Activated CD8-positive, alpha-beta memory T cell treated with anti-CD3 and anti-CD28 coated beads, Interleukin-2, amount 10 ng/mL, durations not matched to agents 7 days and 5 days (primary cell): ENCODE measurements at regions of chr10 and their contacts with region 1.

Region 1: DNA sequence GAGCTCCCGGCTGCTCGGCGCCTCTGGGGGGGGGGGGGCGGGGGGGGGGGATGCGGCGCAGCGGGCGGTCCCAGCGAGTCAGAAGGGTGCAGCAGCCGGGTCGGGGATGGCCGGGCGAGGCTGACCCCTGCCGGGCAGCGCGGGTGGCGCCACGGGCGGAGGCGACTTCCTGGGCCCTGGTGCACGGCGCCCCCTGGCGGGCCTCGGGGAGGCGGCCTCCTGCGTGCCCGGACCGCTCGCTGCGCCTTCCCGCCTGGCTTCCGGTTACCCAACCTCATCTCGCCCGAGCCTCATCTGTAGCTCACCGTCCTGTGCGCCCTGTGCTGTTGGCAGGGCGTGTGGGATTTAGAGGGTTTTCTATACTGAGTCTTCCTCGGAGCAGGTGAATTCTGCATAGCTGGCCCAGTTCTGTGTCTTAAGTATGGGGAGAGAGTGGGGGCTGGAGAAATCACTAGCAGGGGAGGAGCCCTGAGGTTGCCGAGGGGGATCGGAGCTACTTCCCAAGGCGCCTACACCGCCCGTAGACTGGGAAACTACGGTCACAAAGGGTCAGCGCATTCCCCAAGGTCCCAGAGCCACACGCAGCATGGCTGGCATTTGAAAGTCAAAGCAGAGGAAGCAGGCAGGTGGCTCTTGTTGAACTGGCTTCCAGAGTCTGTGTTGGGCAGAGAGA is 28.3 kb upstream of the WDFY4 start:
- DNase-seq: peak; percentile 92
- ATAC-seq: peak; percentile 98
- H3K4me3 Mint-ChIP-seq: peak overlapping the region; percentile 68
- H3K27ac Mint-ChIP-seq: no peak overlapping the region
- H3K4me1 Mint-ChIP-seq: peaks cover 12% of the 10 kb centered on the region
- H3K27me3 Mint-ChIP-seq: peaks cover 35% of the 10 kb centered on the region

Region 2: GRCh38 chr10:48551861-48552591 is 104.4 kb before region 1 on chr10:
- CTCF ChIA-PET with region 1: interaction called, 87 read pairs
- DNase-seq: peak; percentile 41
- ATAC-seq: no peak
- H3K4me3 Mint-ChIP-seq: no peak overlapping the region
- H3K27ac Mint-ChIP-seq: no peak overlapping the region
- H3K4me1 Mint-ChIP-seq: no peaks in the 10 kb centered on the region
- H3K27me3 Mint-ChIP-seq: peaks cover 2% of the 10 kb centered on the region

Region 3: DNA sequence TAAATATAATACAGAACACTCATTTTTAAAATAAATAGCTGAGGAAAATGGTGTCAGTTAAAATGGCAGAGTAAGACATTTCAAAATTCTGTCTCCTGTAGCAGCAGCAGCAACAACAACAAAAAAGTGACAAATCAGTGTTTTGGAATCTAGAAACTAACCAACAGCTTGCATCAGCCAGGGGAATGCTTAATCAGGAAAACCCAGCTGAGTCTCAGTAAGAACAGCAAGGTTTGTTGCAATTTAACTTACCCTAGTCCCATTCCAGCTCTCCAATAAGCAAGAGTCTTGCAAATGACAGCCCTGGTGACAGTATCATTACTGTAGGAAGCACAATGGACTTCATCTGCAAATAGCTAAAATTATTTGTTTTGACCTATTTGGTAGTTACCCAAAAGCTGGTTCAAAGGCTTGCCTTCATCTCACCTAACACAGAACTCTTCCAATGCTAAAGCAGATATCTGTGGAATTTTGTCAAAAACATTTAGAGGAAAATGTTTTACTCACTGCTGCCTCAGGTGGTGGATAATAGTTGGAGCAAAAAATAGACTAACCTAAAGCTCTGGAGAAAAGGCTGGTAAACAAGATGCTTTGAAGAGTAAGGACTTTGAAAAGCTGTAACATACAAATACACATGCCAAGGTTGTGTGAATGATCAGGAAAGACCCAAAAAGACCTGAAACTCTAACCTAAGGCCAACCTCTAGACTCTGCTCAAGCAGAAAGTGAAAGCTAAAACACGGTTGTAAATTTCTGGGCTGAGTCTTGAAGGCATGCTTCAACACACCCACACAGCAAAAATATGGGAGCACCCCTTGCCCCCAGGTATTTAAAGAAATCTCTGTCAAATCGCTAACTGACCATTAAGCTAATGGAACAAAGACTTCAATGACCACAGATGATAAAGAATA is 41.6 kb before region 1 on chr10:
- CTCF ChIA-PET with region 1: interaction called, 15 read pairs
- DNase-seq: no peak
- ATAC-seq: no peak
- H3K4me3 Mint-ChIP-seq: no peak overlapping the region
- H3K27ac Mint-ChIP-seq: no peak overlapping the region
- H3K4me1 Mint-ChIP-seq: no peaks in the 10 kb centered on the region
- H3K27me3 Mint-ChIP-seq: peaks cover 49% of the 10 kb centered on the region

Region 4: GRCh38 chr10:48634198-48634983 is 22.0 kb before region 1 on chr10:
- CTCF ChIA-PET with region 1: interaction called, 18 read pairs
- DNase-seq: peak; percentile 58
- ATAC-seq: peak; percentile 89
- H3K4me3 Mint-ChIP-seq: no peak overlapping the region
- H3K27ac Mint-ChIP-seq: no peak overlapping the region
- H3K4me1 Mint-ChIP-seq: peaks cover 15% of the 10 kb centered on the region
- H3K27me3 Mint-ChIP-seq: peaks cover 39% of the 10 kb centered on the region

Region 5: DNA sequence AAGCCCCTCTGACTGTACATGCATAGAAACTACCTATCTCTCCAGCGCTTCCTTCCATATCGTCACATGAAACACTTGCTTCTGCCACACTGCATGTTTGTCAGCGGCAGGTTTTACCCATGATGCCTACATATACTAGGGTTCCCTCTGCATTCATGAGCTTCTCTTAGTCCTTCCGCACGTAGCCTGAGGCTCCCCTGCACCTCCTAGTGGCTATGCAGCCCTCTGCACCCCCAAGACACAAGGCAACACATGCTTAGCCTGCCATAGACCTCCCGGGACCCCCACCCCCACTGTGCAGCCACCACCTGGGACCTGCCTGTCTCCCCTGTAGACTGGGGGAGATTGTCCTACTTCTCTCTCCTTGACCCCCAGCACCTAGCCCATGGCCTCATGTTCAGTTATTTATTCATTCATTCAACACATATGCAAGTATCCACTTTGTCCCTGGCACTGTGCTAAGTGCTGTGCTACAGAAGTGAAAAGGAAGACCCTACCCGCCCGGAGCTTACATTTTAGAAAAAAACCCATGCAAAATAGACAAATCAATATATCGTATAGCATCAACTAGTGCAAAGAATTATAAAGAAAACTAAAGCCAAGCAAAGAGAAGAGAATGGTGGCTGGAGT is 508.3 kb after region 1 on chr10:
- CTCF ChIA-PET with region 1: interaction called, 11 read pairs
- DNase-seq: peak; percentile 69
- ATAC-seq: peak; percentile 88
- H3K4me3 Mint-ChIP-seq: no peak overlapping the region
- H3K27ac Mint-ChIP-seq: peak overlapping the region; percentile 16
- H3K4me1 Mint-ChIP-seq: peaks cover 29% of the 10 kb centered on the region
- H3K27me3 Mint-ChIP-seq: no peaks in the 10 kb centered on the region

Region 6: DNA sequence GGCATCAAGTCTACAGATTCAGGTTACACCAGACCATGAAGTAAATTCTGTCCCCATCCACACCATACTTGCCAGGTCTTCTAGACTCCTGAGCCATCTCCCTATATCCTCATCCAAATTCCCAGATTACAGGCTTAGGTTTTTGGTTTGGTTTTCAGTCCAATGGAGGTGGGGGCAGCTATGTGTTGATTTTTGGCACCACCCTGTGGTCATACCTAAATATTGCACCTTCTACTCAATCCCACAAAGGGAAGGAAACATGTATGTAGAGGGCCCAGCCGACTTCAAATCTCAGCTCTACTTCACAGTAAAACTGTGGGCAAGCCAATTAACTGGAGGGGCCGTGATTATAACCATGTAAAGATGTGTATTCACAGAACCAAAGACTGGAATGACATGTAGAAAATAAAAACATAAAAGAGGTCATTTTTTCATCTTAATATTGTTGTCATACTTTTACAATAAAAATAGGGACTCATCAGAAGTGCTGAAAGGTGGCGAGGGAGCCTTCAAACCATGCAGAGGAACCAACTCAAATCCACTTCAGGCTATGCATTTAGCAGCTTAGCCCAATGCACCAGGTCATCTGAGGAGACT is 862.7 kb after region 1 on chr10:
- CTCF ChIA-PET with region 1: interaction called, 11 read pairs
- DNase-seq: peak; percentile 50
- ATAC-seq: peak; percentile 78
- H3K4me3 Mint-ChIP-seq: no peak overlapping the region
- H3K27ac Mint-ChIP-seq: no peak overlapping the region
- H3K4me1 Mint-ChIP-seq: no peaks in the 10 kb centered on the region
- H3K27me3 Mint-ChIP-seq: no peaks in the 10 kb centered on the region